PC-3 (cell line): ENCODE measurements at regions of chr3 and their contacts with region 1.

Region 1: GRCh38 chr3:16884084-16884747 is 539 bp upstream of the PLCL2 start:
- DNase-seq: peak; percentile 55
- ATAC-seq: peak; percentile 54
- H3K4me3 ChIP-seq: peak overlapping the region; percentile 94
- H3K27ac ChIP-seq: peak overlapping the region; percentile 12
- H3K4me1 ChIP-seq: peaks cover 34% of the 10 kb centered on the region
- H3K27me3 ChIP-seq: no peaks in the 10 kb centered on the region
- CTCF ChIP-seq: peak; percentile 70

Region 2: GRCh38 chr3:16600780-16601539 is 283.3 kb before region 1 on chr3:
- CTCF ChIA-PET with region 1: interaction called, 4 read pairs
- POLR2A ChIA-PET with region 1: no interaction called
- intact Hi-C with region 1: loop called (anchors 2 kb)
- DNase-seq: peak; percentile 87
- ATAC-seq: peak; percentile 84
- H3K4me3 ChIP-seq: peak overlapping the region; percentile 26; the same call in 1 of the 2 replicates
- H3K27ac ChIP-seq: no peak overlapping the region
- H3K4me1 ChIP-seq: peaks cover 17% of the 10 kb centered on the region
- H3K27me3 ChIP-seq: no peaks in the 10 kb centered on the region
- CTCF ChIP-seq: peak; percentile 87

Region 3: DNA sequence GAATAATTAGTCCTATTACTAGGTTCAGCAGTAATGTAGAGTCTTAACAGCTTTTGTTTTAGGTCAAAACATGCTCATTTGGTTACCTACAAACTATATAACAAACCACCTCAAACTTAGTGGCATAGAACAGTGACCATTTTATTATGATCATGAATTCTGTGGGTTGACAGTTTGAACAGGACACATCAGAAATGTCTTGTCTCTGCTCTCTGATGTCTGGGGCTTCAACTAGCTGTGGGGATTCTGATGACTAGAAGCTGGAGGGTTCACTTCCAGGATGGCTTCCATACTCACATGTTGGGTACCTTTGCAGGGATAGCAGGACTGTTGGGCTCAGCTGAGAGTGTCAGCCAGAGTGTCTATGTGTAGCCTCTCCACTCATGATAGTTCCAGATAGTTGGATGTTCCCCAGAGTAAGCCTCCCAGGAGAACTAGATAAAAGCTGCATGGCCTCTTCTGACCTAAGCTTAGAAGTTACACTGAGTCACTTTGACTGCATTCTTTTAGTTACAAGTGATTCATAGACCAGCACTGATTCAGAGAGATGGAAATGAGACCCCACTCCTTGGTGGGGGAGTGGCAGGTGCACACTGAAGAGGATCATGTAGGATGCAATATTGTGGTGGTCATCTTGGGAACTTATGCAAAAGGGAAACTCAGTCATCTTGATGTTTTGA is 33.2 kb after region 1 on chr3:
- CTCF ChIA-PET with region 1: no interaction called
- POLR2A ChIA-PET with region 1: no interaction called
- intact Hi-C with region 1: no loop called
- DNase-seq: peak; percentile 63
- ATAC-seq: peak; percentile 79
- H3K4me3 ChIP-seq: no peak overlapping the region
- H3K27ac ChIP-seq: peak overlapping the region; percentile 58
- H3K4me1 ChIP-seq: peaks cover 22% of the 10 kb centered on the region
- H3K27me3 ChIP-seq: no peaks in the 10 kb centered on the region
- CTCF ChIP-seq: no peak

Region 4: DNA sequence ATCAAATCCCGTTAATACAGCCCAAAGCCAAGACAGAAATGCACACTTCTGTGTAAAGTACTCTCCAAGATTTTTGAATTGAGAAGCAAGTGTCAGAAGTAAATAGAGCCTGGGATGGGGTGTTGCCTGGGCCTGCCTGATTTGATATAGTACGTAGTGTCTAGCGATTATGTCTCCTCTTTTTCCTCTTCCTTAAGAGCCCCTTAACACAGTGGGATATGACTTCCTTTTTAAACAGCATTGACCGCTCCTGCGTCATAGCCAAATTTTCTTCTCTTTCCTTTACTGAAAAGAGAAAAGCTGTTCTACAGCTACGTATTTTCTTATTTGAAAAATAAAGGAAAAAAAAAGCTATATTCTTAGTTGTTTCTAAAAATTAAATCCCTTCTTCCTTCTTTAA is 98.2 kb after region 1 on chr3:
- CTCF ChIA-PET with region 1: interaction called, 10 read pairs
- POLR2A ChIA-PET with region 1: no interaction called
- intact Hi-C with region 1: no loop called
- DNase-seq: no peak
- ATAC-seq: no peak
- H3K4me3 ChIP-seq: no peak overlapping the region
- H3K27ac ChIP-seq: no peak overlapping the region
- H3K4me1 ChIP-seq: no peaks in the 10 kb centered on the region
- H3K27me3 ChIP-seq: no peaks in the 10 kb centered on the region
- CTCF ChIP-seq: no peak

Region 5: GRCh38 chr3:17032407-17033034 is 148.3 kb after region 1 on chr3:
- CTCF ChIA-PET with region 1: no interaction called
- POLR2A ChIA-PET with region 1: no interaction called
- intact Hi-C with region 1: loop called (anchors 1 kb)
- DNase-seq: peak; percentile 70
- ATAC-seq: peak; percentile 84
- H3K4me3 ChIP-seq: no peak overlapping the region
- H3K27ac ChIP-seq: no peak overlapping the region
- H3K4me1 ChIP-seq: peaks cover 15% of the 10 kb centered on the region
- H3K27me3 ChIP-seq: no peaks in the 10 kb centered on the region
- CTCF ChIP-seq: peak; percentile 95

Region 6: DNA sequence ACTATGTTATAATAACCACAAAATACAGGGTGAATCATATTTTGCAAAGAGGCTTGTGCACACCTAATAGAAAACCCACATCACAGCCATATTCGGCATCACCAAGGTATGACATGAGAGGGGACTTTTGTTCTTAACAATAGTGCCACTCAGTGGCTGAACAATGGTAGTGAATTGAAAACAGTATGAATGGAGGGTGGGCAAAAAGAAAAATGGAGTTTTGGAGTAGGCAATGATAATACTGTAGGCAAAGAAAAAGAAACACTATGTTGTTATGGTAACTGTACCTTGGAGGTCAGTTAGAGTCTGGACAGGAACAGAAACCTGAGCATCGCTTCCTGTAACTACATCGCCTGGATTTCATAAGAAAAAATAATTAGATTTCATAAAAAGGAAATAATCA is 349.2 kb after region 1 on chr3:
- CTCF ChIA-PET with region 1: no interaction called
- POLR2A ChIA-PET with region 1: interaction called, 4 read pairs
- intact Hi-C with region 1: loop called (anchors 1 kb)
- DNase-seq: peak; percentile 97
- ATAC-seq: peak; percentile 99
- H3K4me3 ChIP-seq: no peak overlapping the region
- H3K27ac ChIP-seq: no peak overlapping the region
- H3K4me1 ChIP-seq: peaks cover 18% of the 10 kb centered on the region
- H3K27me3 ChIP-seq: no peaks in the 10 kb centered on the region
- CTCF ChIP-seq: peak; percentile 93

Region 7: DNA sequence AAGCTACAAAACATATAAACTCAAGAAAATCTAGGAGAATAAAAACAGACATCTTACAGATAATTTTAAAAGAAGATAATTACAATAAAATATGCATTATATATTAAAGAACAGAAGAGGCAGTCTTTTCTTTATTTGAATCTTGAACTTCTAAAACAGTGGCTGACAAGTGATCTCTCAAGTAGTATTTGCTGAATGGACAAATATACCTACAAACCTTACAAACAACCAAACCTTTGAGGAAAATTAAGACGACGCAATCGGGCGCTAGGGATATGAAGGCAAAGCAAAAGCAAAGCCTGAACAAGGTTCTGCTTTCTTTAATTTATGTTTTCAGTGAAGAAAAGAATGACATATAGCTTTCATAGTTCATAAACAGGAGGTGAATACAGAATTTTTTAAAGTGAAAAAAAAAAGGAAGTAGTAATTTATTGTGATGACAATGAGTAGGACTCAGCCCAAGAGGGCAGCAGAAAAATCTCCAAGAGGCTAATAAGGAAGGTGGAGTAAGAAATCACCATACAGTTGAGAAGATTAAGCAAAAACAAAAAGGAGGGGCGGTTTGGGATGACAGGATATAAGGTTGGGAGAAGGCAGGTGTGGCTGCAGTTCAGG is 510.4 kb after region 1 on chr3:
- CTCF ChIA-PET with region 1: no interaction called
- POLR2A ChIA-PET with region 1: no interaction called
- intact Hi-C with region 1: no loop called
- DNase-seq: no peak
- ATAC-seq: peak; percentile 38
- H3K4me3 ChIP-seq: no peak overlapping the region
- H3K27ac ChIP-seq: no peak overlapping the region
- H3K4me1 ChIP-seq: no peaks in the 10 kb centered on the region
- H3K27me3 ChIP-seq: no peaks in the 10 kb centered on the region
- CTCF ChIP-seq: no peak